AG04450 (cell line): ENCODE measurements at regions of chr1 and their contacts with region 1.

Region 1: DNA sequence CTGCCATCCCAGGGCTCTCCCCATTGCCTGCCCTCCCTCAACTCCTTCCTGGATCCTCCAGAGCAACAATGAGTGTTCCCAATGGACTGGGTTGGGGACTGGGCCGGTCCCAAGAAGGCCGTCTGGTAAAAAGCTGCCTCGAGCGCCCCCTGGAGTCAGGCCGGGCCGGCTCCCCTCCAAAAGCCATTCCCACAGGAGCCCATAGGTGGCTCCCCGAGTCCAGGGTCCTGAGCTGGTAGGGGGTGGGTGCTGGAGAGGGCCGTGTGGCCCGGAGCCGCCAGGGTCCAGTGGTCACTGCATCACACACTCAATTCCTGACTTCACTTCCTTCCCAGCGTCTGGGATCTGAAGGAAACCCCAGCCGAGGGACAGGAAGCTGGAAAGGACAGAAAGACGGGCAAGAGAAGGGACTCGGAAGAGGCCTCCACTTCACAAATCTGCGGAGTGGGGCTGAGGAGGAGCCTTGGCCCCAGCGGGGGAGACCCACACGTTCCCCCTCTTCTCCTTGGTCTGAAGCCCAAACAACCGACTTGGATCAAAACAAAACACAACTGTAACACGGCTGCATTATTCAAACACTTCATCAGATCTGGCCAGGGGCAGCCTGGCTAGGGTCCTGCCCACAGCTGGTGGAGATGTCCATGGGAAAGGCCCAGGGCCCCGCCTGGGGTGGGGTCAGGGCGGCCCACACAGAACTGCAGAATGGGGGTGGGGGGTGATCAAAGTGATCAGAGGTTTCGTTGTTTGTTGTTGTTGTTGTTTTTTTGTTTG is 10.9 kb upstream of the ALDH4A1 start:
- DNase-seq: peak; percentile 43
- H3K4me3 ChIP-seq: no peak overlapping the region
- H3K27ac ChIP-seq: peak overlapping the region; percentile 33
- H3K27me3 ChIP-seq: no peaks in the 10 kb centered on the region
- CTCF ChIP-seq: peak; percentile 100

Region 2: DNA sequence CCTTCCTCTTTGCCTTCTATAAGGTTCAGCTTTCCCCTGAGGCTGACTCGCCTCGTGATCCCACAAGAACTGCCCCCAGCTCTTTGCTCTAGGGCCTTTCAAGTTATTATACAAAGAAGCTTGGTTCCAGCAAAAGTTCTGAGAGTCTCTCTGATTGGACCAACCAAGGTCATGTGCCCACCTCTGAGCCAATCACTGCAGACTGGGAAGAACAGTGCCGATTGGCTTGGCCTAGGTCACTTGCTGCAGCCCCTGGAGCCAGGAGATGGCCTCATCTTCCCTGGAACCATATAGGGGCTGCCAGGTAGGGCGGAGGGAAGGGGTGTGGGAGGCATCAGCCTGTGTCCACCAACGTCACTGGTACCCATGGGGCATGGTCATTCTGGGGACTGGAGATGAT is 76.6 kb before region 1 on chr1:
- CTCF ChIA-PET with region 1: no interaction called
- POLR2A ChIA-PET with region 1: no interaction called
- DNase-seq: no peak
- H3K4me3 ChIP-seq: no peak overlapping the region
- H3K27ac ChIP-seq: no peak overlapping the region
- H3K27me3 ChIP-seq: peaks cover 2% of the 10 kb centered on the region
- CTCF ChIP-seq: no peak

Region 3: DNA sequence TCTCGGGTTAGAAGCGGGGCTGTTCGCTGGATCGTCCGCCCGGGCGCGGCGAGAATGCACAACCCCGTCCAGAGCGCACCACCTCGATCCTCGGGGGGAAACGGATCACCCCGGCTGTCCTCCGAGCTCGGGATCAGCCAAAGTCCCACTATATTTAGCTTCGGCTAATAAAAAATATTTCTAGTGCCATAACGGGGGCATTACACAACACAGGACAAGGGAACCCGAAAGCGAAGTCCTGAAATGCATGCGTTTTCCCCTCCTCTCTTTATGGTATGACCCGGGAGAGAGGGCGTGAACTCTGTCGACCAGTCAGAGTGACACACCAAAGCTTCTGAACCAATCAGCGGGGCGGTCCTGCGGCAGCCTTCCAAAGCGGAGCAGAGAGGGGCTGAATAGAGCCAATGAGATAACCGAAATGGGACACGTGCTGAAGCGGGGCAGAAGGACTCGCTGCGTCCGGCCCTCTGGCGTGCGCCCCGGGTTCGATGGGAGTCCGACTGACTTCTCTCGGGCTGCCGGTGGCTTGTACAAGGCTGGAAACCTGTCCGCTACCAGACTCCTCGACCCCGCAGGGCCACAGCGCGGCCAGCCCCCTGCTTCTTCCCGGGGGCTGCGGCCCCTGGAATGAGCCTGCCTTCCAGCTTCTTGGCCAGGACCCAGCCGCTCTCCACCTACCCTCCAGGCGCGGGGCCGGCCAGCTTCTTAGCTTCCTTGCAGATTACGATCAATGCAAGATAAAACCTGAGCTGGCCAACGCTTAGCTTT is 10.5 kb before region 1 on chr1 and contains the start of gene ALDH4A1:
- CTCF ChIA-PET with region 1: interaction called, 34 read pairs
- POLR2A ChIA-PET with region 1: no interaction called
- DNase-seq: peak; percentile 95
- H3K4me3 ChIP-seq: peak within 1 kb of the TSS; percentile 90
- H3K27ac ChIP-seq: peak within 1 kb of the TSS; percentile 92
- H3K27me3 ChIP-seq: no peaks in the 10 kb centered on the region
- CTCF ChIP-seq: no peak
- polyA plus RNA-seq, gene ALDH4A1: 8.8 and 14.7 TPM in 2 replicates

Region 4: GRCh38 chr1:18941221-18942141 is 28.2 kb after region 1 on chr1:
- CTCF ChIA-PET with region 1: interaction called, 27 read pairs
- POLR2A ChIA-PET with region 1: no interaction called
- DNase-seq: peak; percentile 85
- H3K4me3 ChIP-seq: no peak overlapping the region
- H3K27ac ChIP-seq: peak overlapping the region; percentile 72
- H3K27me3 ChIP-seq: no peaks in the 10 kb centered on the region
- CTCF ChIP-seq: no peak

Region 5: DNA sequence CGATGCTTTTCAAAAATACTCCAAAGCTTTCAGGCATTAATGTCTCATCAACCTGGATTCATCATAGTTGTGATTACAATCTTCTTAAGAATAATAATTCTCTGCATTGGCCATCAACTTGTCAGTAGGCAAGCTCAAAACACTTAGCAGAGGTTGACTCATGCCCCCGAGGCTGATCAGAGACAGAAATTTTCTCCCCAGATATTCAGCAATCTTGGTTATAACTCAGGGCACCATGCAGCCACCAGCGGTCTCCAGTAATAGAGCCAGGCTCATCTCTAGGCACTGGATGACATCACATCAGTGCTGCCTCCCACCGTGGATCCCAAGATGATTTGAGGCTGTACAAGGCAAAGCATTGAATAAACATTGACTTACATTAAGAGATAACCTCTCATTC is 57.5 kb after region 1 on chr1:
- CTCF ChIA-PET with region 1: interaction called, 20 read pairs
- POLR2A ChIA-PET with region 1: no interaction called
- DNase-seq: no peak
- H3K4me3 ChIP-seq: no peak overlapping the region
- H3K27ac ChIP-seq: no peak overlapping the region
- H3K27me3 ChIP-seq: no peaks in the 10 kb centered on the region
- CTCF ChIP-seq: no peak

Region 6: DNA sequence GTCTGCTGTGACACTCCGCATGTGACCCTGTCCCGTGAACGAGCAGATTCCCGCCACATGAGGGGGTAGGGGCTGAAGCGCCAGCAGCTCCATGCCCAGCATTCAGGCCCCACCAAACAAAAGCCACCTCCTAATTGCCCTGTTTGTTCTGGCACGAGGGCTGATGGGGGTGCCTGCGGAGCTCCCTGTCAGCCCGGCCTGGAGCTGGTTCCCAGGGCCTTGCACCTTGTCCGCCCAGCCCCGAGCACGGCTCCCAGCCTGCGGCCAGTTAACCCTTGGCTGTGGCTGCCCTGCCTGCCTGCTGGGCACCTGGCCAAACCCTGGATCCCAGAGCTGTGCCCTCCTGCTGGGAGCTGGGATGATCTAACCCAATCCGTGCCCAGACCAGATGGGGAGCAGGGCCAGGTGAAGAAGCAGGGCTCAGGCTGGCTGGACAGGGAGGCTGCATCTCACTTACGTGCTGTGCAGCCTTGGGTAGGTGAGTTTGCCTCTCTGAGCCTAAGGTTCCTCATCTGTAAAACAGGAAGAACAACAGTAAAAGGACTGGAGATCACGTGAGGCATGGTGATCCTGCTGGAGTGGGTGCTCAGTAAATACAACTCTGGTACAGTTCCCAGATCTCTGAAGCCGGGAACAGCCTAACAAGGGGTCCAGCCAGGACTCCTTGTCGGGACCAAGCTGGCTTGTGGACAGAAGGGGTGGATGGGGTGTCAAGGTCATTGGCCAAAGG is 154.1 kb after region 1 on chr1:
- CTCF ChIA-PET with region 1: interaction called, 28 read pairs
- POLR2A ChIA-PET with region 1: no interaction called
- DNase-seq: no peak
- H3K4me3 ChIP-seq: no peak overlapping the region
- H3K27ac ChIP-seq: peak overlapping the region; percentile 21
- H3K27me3 ChIP-seq: no peaks in the 10 kb centered on the region
- CTCF ChIP-seq: peak; percentile 10; the same call in 1 of the 2 replicates

Region 7: DNA sequence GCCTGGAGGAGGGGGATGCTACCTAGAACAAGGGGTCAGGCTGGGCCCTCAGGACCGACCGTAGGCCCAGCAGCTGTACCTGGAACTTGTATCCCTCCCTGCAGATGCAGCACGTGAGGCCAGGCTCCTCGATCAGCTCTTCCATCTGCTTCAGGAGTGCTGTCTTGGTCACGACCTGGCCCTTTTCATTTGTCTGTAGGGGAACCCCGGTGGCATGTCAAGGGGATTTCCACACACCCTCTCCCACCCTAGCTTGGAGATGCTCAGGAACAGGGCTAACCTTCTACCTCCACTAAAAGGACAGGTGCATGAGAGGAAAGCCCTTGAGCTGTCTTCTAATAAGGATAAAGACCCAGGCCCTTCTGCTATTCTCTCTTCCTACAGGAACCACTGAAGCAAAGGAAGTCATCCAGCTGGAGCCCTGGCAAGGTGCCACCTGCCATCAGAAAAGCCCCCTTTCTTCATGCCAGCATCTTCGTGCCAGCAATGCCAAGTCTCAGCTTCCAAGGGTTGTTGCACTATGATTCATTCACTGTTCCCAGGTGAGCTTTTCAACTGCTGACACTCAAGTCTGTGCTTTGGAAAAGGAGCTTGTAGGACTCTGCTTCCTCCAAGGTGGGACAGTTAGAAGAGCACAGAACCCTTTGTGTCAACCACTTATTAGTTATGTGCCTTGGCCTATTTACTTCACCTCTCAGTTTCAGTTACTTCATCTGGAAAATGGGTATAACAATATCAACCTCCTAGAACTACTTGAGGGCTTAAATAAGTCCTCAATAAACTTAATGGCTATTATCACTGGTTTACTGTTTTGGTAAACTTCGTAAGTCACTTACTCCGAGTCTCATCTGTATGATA is 174.7 kb after region 1 on chr1:
- CTCF ChIA-PET with region 1: interaction called, 82 read pairs
- POLR2A ChIA-PET with region 1: interaction called, 3 read pairs
- DNase-seq: no peak
- H3K4me3 ChIP-seq: no peak overlapping the region
- H3K27ac ChIP-seq: peak overlapping the region; percentile 41
- H3K27me3 ChIP-seq: no peaks in the 10 kb centered on the region
- CTCF ChIP-seq: no peak

Region 8: GRCh38 chr1:19113697-19114092 is 200.4 kb after region 1 on chr1:
- CTCF ChIA-PET with region 1: interaction called, 11 read pairs
- POLR2A ChIA-PET with region 1: no interaction called
- DNase-seq: no peak
- H3K4me3 ChIP-seq: no peak overlapping the region
- H3K27ac ChIP-seq: no peak overlapping the region
- H3K27me3 ChIP-seq: no peaks in the 10 kb centered on the region
- CTCF ChIP-seq: peak; percentile 59